Activated CD4-positive, alpha-beta T cell treated with anti-CD3 and anti-CD28 coated beads, Interleukin-2, amount 10 ng/mL, durations not matched to agents 7 days and 5 days (primary cell): ENCODE measurements at regions of chr12 and their contacts with region 1.

Region 1: DNA sequence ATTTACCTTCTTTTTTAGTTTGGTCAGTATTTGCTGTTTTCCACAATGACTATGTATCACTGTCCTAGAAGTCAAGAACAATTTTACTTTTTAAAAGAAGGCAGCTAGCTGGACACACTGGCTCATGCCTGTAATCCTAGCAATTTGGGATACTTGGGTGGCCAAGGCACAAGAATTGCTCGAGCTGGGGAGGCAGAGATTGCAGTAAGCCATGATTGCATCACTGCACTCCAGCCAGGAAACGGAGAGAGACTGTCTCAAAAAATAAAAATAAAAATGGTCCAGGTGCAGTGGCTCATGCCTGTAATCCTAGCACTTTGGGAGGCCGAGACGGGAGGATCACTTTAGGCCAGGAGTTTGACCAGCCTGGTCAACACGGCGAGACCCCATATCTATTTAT is 28.3 kb downstream of the MDM1 start:
- DNase-seq: no peak
- H3K4me3 Mint-ChIP-seq: no peak overlapping the region
- H3K27ac Mint-ChIP-seq: no peak overlapping the region
- H3K4me1 Mint-ChIP-seq: peaks cover 11% of the 10 kb centered on the region
- H3K27me3 Mint-ChIP-seq: no peaks in the 10 kb centered on the region

Region 2: DNA sequence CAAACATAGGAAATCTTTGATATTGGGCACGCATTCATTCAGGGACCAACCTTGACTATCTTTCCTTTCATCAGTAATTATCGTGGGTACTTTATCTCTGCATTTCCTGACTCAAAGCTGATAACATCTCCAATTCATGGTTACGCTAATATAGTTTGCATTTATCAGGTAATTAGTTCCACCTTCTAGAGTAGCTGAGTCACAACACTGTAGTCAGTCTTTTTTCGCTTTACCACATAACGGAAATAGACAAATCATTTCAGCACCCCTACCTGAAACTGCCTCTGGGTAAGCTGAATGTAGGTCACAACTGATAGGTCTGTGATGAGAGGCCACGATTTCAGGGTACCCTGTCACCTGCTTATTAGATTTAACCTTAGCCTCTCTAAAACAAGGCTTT is 13.7 kb before region 1 on chr12:
- CTCF ChIA-PET with region 1: interaction called, 3 read pairs
- POLR2A ChIA-PET with region 1: interaction called, 11 read pairs
- DNase-seq: peak; percentile 51
- H3K4me3 Mint-ChIP-seq: no peak overlapping the region
- H3K27ac Mint-ChIP-seq: peak overlapping the region; percentile 10
- H3K4me1 Mint-ChIP-seq: peaks cover 26% of the 10 kb centered on the region
- H3K27me3 Mint-ChIP-seq: peaks cover 15% of the 10 kb centered on the region

Region 3: GRCh38 chr12:68349921-68350606 is 46.2 kb after region 1 on chr12:
- CTCF ChIA-PET with region 1: no interaction called
- POLR2A ChIA-PET with region 1: no interaction called
- DNase-seq: no peak
- H3K4me3 Mint-ChIP-seq: no peak overlapping the region
- H3K27ac Mint-ChIP-seq: no peak overlapping the region
- H3K4me1 Mint-ChIP-seq: peaks cover 16% of the 10 kb centered on the region
- H3K27me3 Mint-ChIP-seq: peaks cover 3% of the 10 kb centered on the region